ENCODE measurements at regions of chr18 and their contacts with region 1.

Region 1: GRCh38 chr18:23857756-23858155 is 156.8 kb upstream of the TTC39C start:
- DNase-seq: no peak
- ATAC-seq: no peak
- H3K4me3 ChIP-seq: no peak overlapping the region
- H3K4me3 Mint-ChIP-seq: no peak overlapping the region
- H3K27ac ChIP-seq: no peak overlapping the region
- H3K27ac Mint-ChIP-seq: no peak overlapping the region
- H3K4me1 ChIP-seq: peaks cover 6% of the 10 kb centered on the region
- H3K4me1 Mint-ChIP-seq: peaks cover 22% of the 10 kb centered on the region
- H3K27me3 ChIP-seq: no peaks in the 10 kb centered on the region
- H3K27me3 Mint-ChIP-seq: no peaks in the 10 kb centered on the region
- CTCF ChIP-seq: no peak

Region 2: GRCh38 chr18:23890589-23890988 is 32.8 kb after region 1 on chr18:
- CTCF ChIA-PET with region 1: interaction called, 3 read pairs
- POLR2A ChIA-PET with region 1: no interaction called
- intact Hi-C with region 1: loop called in 1 of 2 experiments (anchors 5 kb)
- DNase-seq: no peak
- ATAC-seq: no peak
- H3K4me3 ChIP-seq: no peak overlapping the region
- H3K4me3 Mint-ChIP-seq: no peak overlapping the region
- H3K27ac ChIP-seq: no peak overlapping the region
- H3K27ac Mint-ChIP-seq: no peak overlapping the region
- H3K4me1 ChIP-seq: peaks cover 13% of the 10 kb centered on the region
- H3K4me1 Mint-ChIP-seq: peaks cover 5% of the 10 kb centered on the region
- H3K27me3 ChIP-seq: no peaks in the 10 kb centered on the region
- H3K27me3 Mint-ChIP-seq: no peaks in the 10 kb centered on the region
- CTCF ChIP-seq: no peak

Measured in CD4-positive, alpha-beta T cell (primary cell).